Heart right ventricle (tissue), 16 donors: ENCODE measurements at regions of chr12 and their contacts with region 1.

Region 1: DNA sequence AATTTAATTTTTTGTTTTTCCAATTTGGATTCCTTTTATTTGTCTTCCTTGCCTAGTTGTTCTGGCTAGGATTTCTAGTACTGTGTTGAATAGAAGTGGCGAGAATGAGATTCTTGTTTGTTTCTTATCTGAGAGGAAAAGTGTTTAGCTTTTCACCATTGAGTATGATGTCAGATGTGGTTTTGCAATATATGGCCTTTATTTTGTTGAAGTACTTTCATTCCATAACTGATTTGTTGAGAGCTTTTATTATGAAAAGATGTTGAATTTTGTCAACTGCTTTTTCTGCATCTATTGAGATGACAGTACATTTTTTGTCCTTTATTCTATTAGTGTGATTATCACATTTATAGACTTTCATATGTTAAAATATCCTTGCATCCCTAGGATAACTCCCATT is 462.0 kb downstream of the CCDC91 start:
- DNase-seq: no peak
- ATAC-seq: no peak
- H3K4me3 ChIP-seq: no peak overlapping the region
- H3K27ac ChIP-seq: no peak overlapping the region
- H3K4me1 ChIP-seq: no peaks in the 10 kb centered on the region
- H3K27me3 ChIP-seq: no peaks in the 10 kb centered on the region
- CTCF ChIP-seq: no peak

Region 2: DNA sequence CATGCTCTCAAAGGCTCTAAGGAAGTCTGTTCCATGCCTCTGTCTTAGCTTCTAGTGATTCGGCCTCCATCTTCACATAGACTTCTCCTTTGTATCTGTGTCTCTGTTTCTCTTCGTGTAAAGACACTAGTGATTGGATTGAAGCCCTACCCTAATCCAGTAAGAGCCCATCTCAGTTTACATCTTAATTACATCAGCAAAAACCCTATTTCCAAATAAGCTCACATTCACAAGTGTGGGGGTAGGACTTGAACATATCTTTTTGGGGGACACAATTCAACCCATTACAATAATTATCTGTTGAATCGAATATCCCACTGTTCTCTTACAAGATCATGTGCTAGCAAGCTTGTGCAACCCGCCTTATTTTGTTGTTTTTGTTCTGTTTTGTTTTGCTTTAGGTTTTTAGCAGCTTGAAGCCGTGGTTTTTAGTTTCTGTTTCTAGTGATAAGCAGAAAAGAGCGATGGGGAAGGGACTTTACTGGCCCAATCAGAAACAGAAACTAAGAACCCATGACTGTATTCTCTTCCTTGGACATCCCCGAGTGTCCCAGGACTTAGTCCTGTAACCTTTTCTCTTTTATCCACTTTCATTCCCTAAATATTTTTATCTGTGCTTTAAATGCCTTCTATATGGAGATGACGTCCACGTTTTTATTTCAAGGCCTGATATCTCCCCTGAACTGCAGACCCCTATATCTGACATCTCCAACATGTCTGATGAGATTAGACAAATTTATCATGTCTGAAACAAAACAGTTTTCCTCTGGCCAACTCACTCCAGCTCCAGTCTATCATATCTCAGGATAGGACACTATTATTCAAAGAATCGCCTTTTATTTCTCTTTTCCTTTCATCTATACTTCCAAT is 109.0 kb before region 1 on chr12:
- intact Hi-C with region 1: no loop called
- DNase-seq: no peak
- ATAC-seq: no peak
- H3K4me3 ChIP-seq: peak overlapping the region in 3 of 10 donors; percentile 8 to 29 (median 28)
- H3K27ac ChIP-seq: no peak overlapping the region
- H3K4me1 ChIP-seq: no peaks in the 10 kb centered on the region
- H3K27me3 ChIP-seq: no peaks in the 10 kb centered on the region
- CTCF ChIP-seq: no peak

Region 3: GRCh38 chr12:28742791-28743190 is 90.6 kb after region 1 on chr12:
- intact Hi-C with region 1: loop called in 1 of 10 experiments (anchors 10 kb)
- DNase-seq: no peak
- ATAC-seq: no peak
- H3K4me3 ChIP-seq: no peak overlapping the region
- H3K27ac ChIP-seq: no peak overlapping the region
- H3K4me1 ChIP-seq: no peaks in the 10 kb centered on the region
- H3K27me3 ChIP-seq: no peaks in the 10 kb centered on the region
- CTCF ChIP-seq: no peak

Region 4: GRCh38 chr12:28963554-28963953 is 311.3 kb after region 1 on chr12:
- intact Hi-C with region 1: no loop called
- DNase-seq: no peak
- ATAC-seq: no peak
- H3K4me3 ChIP-seq: no peak overlapping the region
- H3K27ac ChIP-seq: no peak overlapping the region
- H3K4me1 ChIP-seq: peaks cover 0 to 56% (median 30%) of the 10 kb centered on the region in 9 donors
- H3K27me3 ChIP-seq: no peaks in the 10 kb centered on the region
- CTCF ChIP-seq: peak in 7 of 9 donors; percentile 5 to 53 (median 32)